ENCODE measurements at regions of chr6 and their contacts with region 1.

Region 1: DNA sequence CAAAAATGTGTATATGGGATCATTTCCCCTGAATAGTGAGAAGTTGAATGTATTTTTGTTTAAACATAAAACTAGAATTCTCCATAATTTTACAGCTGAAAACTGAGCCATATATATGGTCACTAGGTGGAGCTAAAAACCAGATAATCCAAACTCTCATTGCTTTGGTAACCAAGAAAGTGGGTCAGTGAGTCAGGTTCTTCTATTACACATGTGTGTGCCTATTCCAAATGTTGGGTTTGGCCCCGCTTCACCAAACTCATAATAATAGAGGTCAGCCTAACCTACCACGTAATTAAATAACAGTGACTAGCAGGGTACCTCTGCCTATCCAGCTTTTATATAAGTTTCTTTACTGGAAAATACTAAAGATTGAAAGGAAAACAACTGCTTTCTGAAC is 19.3 kb upstream of the RNGTT start:
- DNase-seq: peak; percentile 26
- H3K4me3 ChIP-seq: no peak overlapping the region
- CTCF ChIP-seq: peak; percentile 48

Region 2: GRCh38 chr6:89007209-89008000 is 24.7 kb after region 1 on chr6:
- CTCF ChIA-PET with region 1: interaction called, 12 read pairs
- POLR2A ChIA-PET with region 1: no interaction called
- DNase-seq: no peak
- H3K4me3 ChIP-seq: no peak overlapping the region
- CTCF ChIP-seq: no peak

Region 3: GRCh38 chr6:89122625-89123024 is 139.9 kb after region 1 on chr6:
- CTCF ChIA-PET with region 1: interaction called, 27 read pairs
- POLR2A ChIA-PET with region 1: no interaction called
- DNase-seq: no peak
- H3K4me3 ChIP-seq: no peak overlapping the region
- CTCF ChIP-seq: peak; percentile 40

Region 4: GRCh38 chr6:89242574-89243330 is 260.0 kb after region 1 on chr6:
- CTCF ChIA-PET with region 1: interaction called, 162 read pairs
- POLR2A ChIA-PET with region 1: no interaction called
- DNase-seq: peak; percentile 28
- H3K4me3 ChIP-seq: no peak overlapping the region
- CTCF ChIP-seq: peak; percentile 34

Region 5: GRCh38 chr6:89371849-89372505 is 389.3 kb after region 1 on chr6:
- CTCF ChIA-PET with region 1: interaction called, 17 read pairs
- POLR2A ChIA-PET with region 1: no interaction called
- DNase-seq: no peak
- H3K4me3 ChIP-seq: no peak overlapping the region
- CTCF ChIP-seq: peak; percentile 98

Measured in AG04449 (cell line).